IMR-90 (cell line): ENCODE measurements at regions of chr14 and their contacts with region 1.

Region 1: GRCh38 chr14:99884834-99885648 is 91.8 kb downstream of the EML1 start:
- DNase-seq: peak; percentile 77
- ATAC-seq: peak; percentile 94
- H3K4me3 ChIP-seq: no peak overlapping the region
- H3K27ac ChIP-seq: no peak overlapping the region
- H3K4me1 ChIP-seq: peaks cover 8% of the 10 kb centered on the region
- H3K27me3 ChIP-seq: no peaks in the 10 kb centered on the region
- CTCF ChIP-seq: peak; percentile 91
- POLR2A ChIP-seq: no peak
- RAD21 ChIP-seq: peak; percentile 95

Region 2: DNA sequence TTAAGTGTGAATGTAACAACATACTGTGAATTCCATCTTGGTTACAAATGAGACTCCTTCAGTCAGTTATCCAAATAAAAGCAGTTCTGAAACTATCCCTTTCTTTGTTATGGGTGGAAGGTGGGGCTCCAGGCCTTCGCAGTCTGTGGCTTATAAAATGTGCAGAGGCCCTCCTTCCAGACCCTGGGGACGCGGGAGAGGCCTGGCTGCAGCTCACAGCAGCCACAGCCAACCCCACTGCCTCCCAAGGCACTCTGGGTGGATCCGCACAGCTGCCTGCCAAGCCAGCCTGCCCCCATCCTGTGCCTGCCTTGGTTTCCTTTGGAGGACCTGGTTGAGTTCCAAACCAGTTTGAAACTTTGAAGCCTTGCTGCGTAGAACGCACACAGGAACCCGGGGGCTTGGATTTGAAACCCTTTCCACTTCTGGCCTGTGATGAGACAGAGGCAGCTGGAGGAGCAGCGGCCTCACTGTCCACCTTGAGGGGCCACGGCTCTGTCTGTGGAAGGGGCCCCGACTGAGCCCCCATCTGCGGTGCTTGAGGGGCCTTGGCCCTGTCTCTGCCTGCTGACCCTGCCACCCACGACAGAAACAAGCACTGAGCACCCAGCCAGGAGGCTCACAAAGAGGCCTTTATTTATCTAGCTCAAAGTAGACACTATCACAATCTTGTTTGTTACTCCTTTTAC is 373.5 kb before region 1 on chr14:
- CTCF ChIA-PET with region 1: no interaction called
- POLR2A ChIA-PET with region 1: no interaction called
- dilution Hi-C with region 1: no loop called
- in situ Hi-C with region 1: loop called (anchors 5 kb)
- intact Hi-C with region 1: no loop called
- DNase-seq: peak; percentile 67
- ATAC-seq: peak; percentile 91
- H3K4me3 ChIP-seq: no peak overlapping the region
- H3K27ac ChIP-seq: peak overlapping the region; percentile 89
- H3K4me1 ChIP-seq: peaks cover 15% of the 10 kb centered on the region
- H3K27me3 ChIP-seq: no peaks in the 10 kb centered on the region
- CTCF ChIP-seq: no peak
- POLR2A ChIP-seq: no peak
- RAD21 ChIP-seq: no peak

Region 3: GRCh38 chr14:99518441-99519346 is 366.3 kb before region 1 on chr14:
- CTCF ChIA-PET with region 1: no interaction called
- POLR2A ChIA-PET with region 1: no interaction called
- dilution Hi-C with region 1: no loop called
- in situ Hi-C with region 1: loop called (anchors 5 kb)
- intact Hi-C with region 1: loop called (anchors 1 kb)
- DNase-seq: peak; percentile 32
- ATAC-seq: peak; percentile 51
- H3K4me3 ChIP-seq: no peak overlapping the region
- H3K27ac ChIP-seq: no peak overlapping the region
- H3K4me1 ChIP-seq: peaks cover 20% of the 10 kb centered on the region
- H3K27me3 ChIP-seq: no peaks in the 10 kb centered on the region
- CTCF ChIP-seq: peak; percentile 94
- POLR2A ChIP-seq: 0 out of 2 replicates have a peak, but pooled peaks have one; percentile 26
- RAD21 ChIP-seq: peak; percentile 93

Region 4: DNA sequence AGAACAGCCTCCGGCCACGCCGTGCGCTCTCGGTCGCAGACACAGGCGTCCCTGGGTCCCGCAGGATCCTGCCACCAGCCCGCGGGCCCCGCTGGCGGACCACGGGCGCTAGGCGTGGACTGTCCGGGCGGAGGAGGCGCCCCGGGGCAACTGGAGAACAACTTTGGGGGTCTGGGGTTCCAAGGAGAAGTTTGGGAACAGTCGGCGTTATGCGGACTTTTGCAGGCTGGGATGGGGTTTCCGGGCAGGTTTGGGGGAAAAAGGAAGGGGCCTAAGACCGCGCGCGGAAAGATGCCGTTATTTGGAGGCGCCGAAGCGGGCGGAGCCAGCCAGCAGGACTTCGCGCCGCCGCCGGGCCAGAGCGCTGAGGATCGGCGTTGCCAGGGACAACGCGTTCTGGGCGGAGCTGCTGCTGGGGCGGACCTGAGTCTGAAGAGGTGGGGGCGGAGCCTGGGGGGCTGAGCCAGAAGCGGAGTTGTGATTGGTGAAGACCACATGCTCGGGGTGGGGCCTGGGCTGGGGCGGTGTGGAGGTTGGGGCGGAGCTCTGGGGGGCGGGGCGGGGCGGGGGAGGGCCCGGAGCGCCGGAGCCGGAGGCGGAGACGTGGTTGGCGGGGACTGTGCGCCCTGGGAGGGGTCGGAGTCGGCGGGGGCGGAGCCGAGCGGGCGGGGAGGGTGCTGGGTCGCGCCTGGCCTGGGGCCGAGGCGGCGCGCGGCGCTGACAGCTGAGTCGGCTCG is 201.3 kb before region 1 on chr14 and contains the start of gene CYP46A1:
- CTCF ChIA-PET with region 1: interaction called, 3 read pairs
- POLR2A ChIA-PET with region 1: no interaction called
- dilution Hi-C with region 1: no loop called
- in situ Hi-C with region 1: loop called (anchors 5 kb)
- intact Hi-C with region 1: loop called (anchors 1 kb)
- DNase-seq: peak; percentile 99
- ATAC-seq: peak; percentile 97
- H3K4me3 ChIP-seq: peak within 1 kb of the TSS; percentile 88
- H3K27ac ChIP-seq: peak within 1 kb of the TSS; percentile 65
- H3K4me1 ChIP-seq: peaks cover 8% of the 10 kb centered on the region
- H3K27me3 ChIP-seq: peaks cover 29% of the 10 kb centered on the region
- CTCF ChIP-seq: no peak
- POLR2A ChIP-seq: no peak
- RAD21 ChIP-seq: no peak
- total RNA-seq, gene CYP46A1: under 0.01 and 0.18 TPM in 2 replicates

Region 5: DNA sequence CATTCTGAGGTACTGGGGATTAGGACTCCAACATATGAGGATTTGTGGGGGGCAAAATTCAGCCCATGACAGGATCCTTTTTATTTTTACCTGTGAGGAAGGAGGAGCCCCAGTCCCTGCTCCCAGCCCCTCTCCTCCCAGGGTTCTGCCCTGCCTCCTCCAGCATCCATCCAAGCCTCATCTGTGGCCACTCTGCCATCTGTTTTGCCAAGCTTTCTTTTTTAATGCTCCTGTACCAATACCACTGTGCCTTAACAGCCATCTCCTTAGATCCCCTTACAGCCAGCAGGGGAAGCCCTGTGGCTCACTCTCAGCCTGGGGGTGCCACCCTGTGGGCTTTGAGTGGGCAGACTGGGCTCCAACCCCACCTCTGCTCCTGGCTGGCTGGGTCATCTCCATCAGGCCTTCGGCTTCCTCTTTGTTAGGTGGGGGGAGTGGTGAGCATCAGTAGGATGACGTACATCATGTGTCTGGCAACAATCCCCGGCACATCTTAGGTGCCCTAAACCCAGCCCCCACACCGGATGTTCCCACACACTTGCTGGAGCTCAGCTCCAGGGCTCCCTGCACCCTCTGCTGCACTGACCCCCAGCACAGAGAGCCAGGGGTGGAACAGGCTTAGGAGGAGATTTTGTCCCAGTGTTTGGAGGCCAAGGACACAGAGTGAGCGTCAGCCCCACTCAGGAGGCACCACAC is 160.7 kb before region 1 on chr14:
- CTCF ChIA-PET with region 1: no interaction called
- POLR2A ChIA-PET with region 1: no interaction called
- dilution Hi-C with region 1: no loop called
- in situ Hi-C with region 1: loop called (anchors 5 kb)
- intact Hi-C with region 1: no loop called
- DNase-seq: peak; percentile 49
- ATAC-seq: no peak; the same call in 1 of the 2 replicates
- H3K4me3 ChIP-seq: no peak overlapping the region
- H3K27ac ChIP-seq: no peak overlapping the region
- H3K4me1 ChIP-seq: no peaks in the 10 kb centered on the region
- H3K27me3 ChIP-seq: peaks cover 17% of the 10 kb centered on the region
- CTCF ChIP-seq: 0 out of 2 replicates have a peak, but pooled peaks have one; percentile 2
- POLR2A ChIP-seq: no peak
- RAD21 ChIP-seq: no peak

Region 6: GRCh38 chr14:99729991-99730868 is 154.8 kb before region 1 on chr14:
- CTCF ChIA-PET with region 1: interaction called, 3 read pairs
- POLR2A ChIA-PET with region 1: no interaction called
- dilution Hi-C with region 1: no loop called
- in situ Hi-C with region 1: no loop called
- intact Hi-C with region 1: loop called (anchors 1 kb)
- DNase-seq: peak; percentile 19
- ATAC-seq: peak; percentile 98
- H3K4me3 ChIP-seq: peak overlapping the region; percentile 49
- H3K27ac ChIP-seq: no peak overlapping the region; the same call in 1 of the 2 replicates
- H3K4me1 ChIP-seq: peaks cover 3% of the 10 kb centered on the region; the same call in 1 of the 2 replicates
- H3K27me3 ChIP-seq: peaks cover 6% of the 10 kb centered on the region; the same call in 1 of the 2 replicates
- CTCF ChIP-seq: peak; percentile 91
- POLR2A ChIP-seq: no peak
- RAD21 ChIP-seq: peak; percentile 95

Region 7: GRCh38 chr14:99763527-99764221 is 121.4 kb before region 1 on chr14:
- CTCF ChIA-PET with region 1: no interaction called
- POLR2A ChIA-PET with region 1: no interaction called
- dilution Hi-C with region 1: no loop called
- in situ Hi-C with region 1: no loop called
- intact Hi-C with region 1: no loop called
- DNase-seq: no peak
- ATAC-seq: no peak
- H3K4me3 ChIP-seq: no peak overlapping the region
- H3K27ac ChIP-seq: no peak overlapping the region
- H3K4me1 ChIP-seq: peaks cover 12% of the 10 kb centered on the region
- H3K27me3 ChIP-seq: no peaks in the 10 kb centered on the region
- CTCF ChIP-seq: no peak
- POLR2A ChIP-seq: no peak
- RAD21 ChIP-seq: no peak

Region 8: DNA sequence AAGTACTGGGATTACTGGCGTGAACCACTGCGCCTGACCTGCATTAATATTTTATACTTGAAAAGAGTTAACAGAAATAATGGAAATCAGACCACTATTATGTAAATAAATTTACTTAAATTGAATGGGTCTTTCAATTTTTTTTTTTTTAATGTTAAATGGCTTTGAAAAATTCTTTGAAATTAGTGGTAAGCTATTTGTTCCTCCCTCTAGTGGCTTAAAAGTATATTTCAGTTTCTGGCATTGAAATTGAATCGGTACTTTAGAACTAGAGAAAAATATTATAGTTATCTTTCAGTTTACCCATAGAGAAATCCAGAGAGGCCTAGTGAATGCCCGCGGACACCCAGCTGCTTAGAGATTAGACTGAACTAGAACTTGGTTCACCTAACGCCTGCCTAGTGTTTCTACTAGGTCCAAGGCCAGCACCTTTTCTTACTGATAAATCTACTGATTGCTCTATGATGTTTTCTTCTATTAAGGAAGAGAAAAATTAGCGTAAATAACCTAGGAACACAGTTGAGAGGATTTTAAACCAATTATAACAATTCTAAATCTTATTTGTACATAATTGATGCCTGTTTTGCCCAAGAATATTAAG is 14.6 kb after region 1 on chr14:
- CTCF ChIA-PET with region 1: interaction called, 3 read pairs
- POLR2A ChIA-PET with region 1: interaction called, 11 read pairs
- dilution Hi-C with region 1: no loop called
- in situ Hi-C with region 1: no loop called
- intact Hi-C with region 1: no loop called
- DNase-seq: peak; percentile 47
- ATAC-seq: peak; percentile 62
- H3K4me3 ChIP-seq: no peak overlapping the region
- H3K27ac ChIP-seq: no peak overlapping the region
- H3K4me1 ChIP-seq: no peaks in the 10 kb centered on the region
- H3K27me3 ChIP-seq: no peaks in the 10 kb centered on the region
- CTCF ChIP-seq: peak; percentile 56
- POLR2A ChIP-seq: no peak
- RAD21 ChIP-seq: peak; percentile 39